H1 (cell line): ENCODE measurements at regions of chr4 and their contacts with region 1.

Region 1: DNA sequence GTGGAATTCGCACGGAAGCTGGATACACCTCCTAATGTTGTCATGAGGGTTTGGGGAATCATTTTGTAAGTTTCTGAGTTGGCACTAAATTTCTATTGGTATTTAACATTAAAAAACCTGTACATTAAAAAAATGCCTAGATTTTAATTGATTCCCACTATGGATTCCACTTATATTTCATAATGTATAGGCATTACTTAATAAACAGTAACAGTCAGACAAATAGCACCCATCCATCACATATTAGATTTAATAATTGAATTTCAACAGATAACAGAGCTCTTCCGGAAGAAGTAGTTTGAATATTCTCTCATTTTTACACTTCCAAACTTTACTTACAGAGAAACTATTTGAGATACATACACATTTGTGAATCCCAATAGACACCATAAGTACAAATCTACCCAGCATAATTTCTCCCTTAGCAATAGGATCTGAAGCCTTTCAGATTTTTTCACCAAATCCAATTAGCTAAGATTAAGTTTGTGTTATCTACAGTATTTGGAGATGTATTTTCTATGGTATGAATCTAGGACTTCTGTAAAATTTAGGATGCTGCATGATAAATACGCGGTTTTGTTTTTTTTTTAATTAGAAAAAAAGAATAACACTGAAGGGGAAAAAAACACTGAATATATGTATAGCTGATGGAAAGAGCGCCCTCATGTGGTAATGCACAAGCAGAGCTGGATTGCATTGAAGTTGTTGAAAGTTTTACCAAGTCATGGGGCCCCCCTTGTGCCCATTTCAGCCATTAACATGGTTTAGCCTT is 12.2 kb upstream of the ODAM start:
- DNase-seq: peak; percentile 9 to 46
- H3K4me3 ChIP-seq: no peak overlapping the region
- H3K27ac ChIP-seq: no peak overlapping the region
- H3K4me1 ChIP-seq: no peaks in the 10 kb centered on the region
- H3K27me3 ChIP-seq: no peaks in the 10 kb centered on the region
- CTCF ChIP-seq: peak in 2 of 3 experiments; percentile 83 to 92; a peak in 3 of 4 replicates
- EP300 ChIP-seq: no peak
- POLR2A ChIP-seq: no peak
- RAD21 ChIP-seq: peak; percentile 84 to 86

Region 2: GRCh38 chr4:69896530-69897116 is 286.7 kb before region 1 on chr4:
- CTCF ChIA-PET with region 1: interaction called, 13 read pairs
- POLR2A ChIA-PET with region 1: no interaction called
- DNase-seq: no peak
- H3K4me3 ChIP-seq: no peak overlapping the region
- H3K27ac ChIP-seq: no peak overlapping the region
- H3K4me1 ChIP-seq: no peaks in the 10 kb centered on the region
- H3K27me3 ChIP-seq: no peaks in the 10 kb centered on the region
- CTCF ChIP-seq: peak in 2 of 3 experiments; percentile 31 to 42; a peak in 2 of 4 replicates
- EP300 ChIP-seq: no peak
- POLR2A ChIP-seq: no peak
- RAD21 ChIP-seq: peak; percentile 68 to 70

Region 3: GRCh38 chr4:70151271-70151670 is 32.1 kb before region 1 on chr4:
- CTCF ChIA-PET with region 1: no interaction called
- POLR2A ChIA-PET with region 1: no interaction called
- DNase-seq: no peak
- H3K4me3 ChIP-seq: no peak overlapping the region
- H3K27ac ChIP-seq: no peak overlapping the region
- H3K4me1 ChIP-seq: no peaks in the 10 kb centered on the region
- H3K27me3 ChIP-seq: no peaks in the 10 kb centered on the region
- CTCF ChIP-seq: no peak
- EP300 ChIP-seq: no peak
- POLR2A ChIP-seq: no peak
- RAD21 ChIP-seq: no peak

Region 4: GRCh38 chr4:70197842-70198241 is 14.5 kb after region 1 on chr4:
- CTCF ChIA-PET with region 1: interaction called, 12 read pairs
- POLR2A ChIA-PET with region 1: interaction called, 3 read pairs
- DNase-seq: no peak
- H3K4me3 ChIP-seq: no peak overlapping the region
- H3K27ac ChIP-seq: no peak overlapping the region
- H3K4me1 ChIP-seq: no peaks in the 10 kb centered on the region
- H3K27me3 ChIP-seq: no peaks in the 10 kb centered on the region
- CTCF ChIP-seq: no peak
- EP300 ChIP-seq: no peak
- POLR2A ChIP-seq: no peak
- RAD21 ChIP-seq: no peak